Caco-2 (cell line): ENCODE measurements at regions of chr11 and their contacts with region 1.

Region 1: GRCh38 chr11:43311791-43312607 is at the start of gene API5:
- DNase-seq: peak; percentile 95 to 96
- H3K4me3 ChIP-seq: peak within 1 kb of the TSS; percentile 79
- H3K4me3 Mint-ChIP-seq: peak within 1 kb of the TSS; percentile 99
- H3K27ac Mint-ChIP-seq: peak within 1 kb of the TSS; percentile 97
- H3K4me1 ChIP-seq: peaks cover 6% of the 10 kb centered on the region; the same call in 1 of the 2 replicates
- H3K4me1 Mint-ChIP-seq: peaks cover 7% of the 10 kb centered on the region
- H3K27me3 ChIP-seq: no peaks in the 10 kb centered on the region
- H3K27me3 Mint-ChIP-seq: no peaks in the 10 kb centered on the region
- CTCF ChIP-seq: peak; percentile 67 to 95
- total RNA-seq, gene API5: 129 and 140 TPM in 2 replicates

Region 2: DNA sequence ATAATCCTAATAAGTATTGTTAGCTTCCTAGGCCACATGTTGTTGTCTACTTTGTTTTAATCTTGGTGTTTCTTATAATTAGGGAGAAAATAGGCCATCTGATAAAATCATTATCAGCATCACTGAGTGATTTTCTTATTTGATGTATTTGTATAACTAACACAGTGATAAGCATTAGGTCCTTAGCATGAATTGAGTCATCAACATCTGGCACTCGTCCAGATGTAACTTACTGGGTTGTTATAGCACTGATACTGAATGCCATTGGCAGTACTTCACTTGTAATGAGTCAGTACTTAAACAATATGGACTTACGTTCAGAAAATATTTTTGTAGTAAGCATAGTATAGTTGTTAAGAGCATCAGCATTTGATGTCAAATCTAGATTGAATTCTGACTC is 16.0 kb after region 1 on chr11:
- CTCF ChIA-PET with region 1: no interaction called
- POLR2A ChIA-PET with region 1: no interaction called
- intact Hi-C with region 1: no loop called
- DNase-seq: no peak
- H3K4me3 ChIP-seq: no peak overlapping the region
- H3K4me3 Mint-ChIP-seq: no peak overlapping the region
- H3K27ac Mint-ChIP-seq: no peak overlapping the region
- H3K4me1 ChIP-seq: no peaks in the 10 kb centered on the region
- H3K4me1 Mint-ChIP-seq: no peaks in the 10 kb centered on the region
- H3K27me3 ChIP-seq: no peaks in the 10 kb centered on the region
- H3K27me3 Mint-ChIP-seq: no peaks in the 10 kb centered on the region
- CTCF ChIP-seq: no peak

Region 3: DNA sequence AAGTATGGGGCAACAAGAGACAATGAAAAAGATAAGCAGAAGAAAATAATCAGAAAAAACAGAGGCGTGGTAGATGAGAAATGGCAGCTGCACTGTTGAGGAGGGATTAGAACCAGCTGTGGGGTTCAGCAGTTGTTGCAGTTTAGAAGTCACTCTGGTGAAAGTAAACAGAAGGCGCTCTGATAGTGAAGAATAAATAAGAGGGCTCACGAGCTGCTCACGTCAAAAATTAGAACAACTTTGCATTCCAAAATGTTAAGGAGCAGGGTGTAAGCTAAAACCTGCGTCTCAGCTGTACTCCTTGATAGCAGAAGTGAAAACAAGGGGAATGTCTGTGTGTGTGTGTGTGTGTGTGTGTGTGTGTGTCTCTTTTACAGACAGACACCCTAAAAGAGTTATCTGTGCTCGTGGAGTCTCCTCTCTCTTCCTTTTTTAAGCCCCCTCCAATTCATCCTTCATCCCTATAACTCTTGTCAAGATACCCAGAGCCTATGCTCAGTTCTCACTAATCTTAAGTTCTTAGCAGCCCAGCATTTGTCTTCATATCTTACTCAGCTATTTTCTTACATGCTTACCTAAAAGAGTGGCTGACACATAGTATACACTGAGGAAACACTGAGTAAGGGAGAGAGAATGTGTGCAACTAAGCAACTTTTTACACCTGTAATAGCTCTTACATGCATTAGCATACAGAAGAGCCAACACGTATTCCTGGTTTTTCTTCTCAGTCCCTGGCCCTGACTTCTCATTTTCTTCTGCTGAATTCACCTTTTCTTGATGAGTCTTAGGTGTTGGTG is 55.6 kb after region 1 on chr11:
- CTCF ChIA-PET with region 1: interaction called, 10 read pairs
- POLR2A ChIA-PET with region 1: no interaction called
- intact Hi-C with region 1: no loop called
- DNase-seq: no peak
- H3K4me3 ChIP-seq: no peak overlapping the region
- H3K4me3 Mint-ChIP-seq: no peak overlapping the region
- H3K27ac Mint-ChIP-seq: no peak overlapping the region
- H3K4me1 ChIP-seq: peaks cover 16% of the 10 kb centered on the region
- H3K4me1 Mint-ChIP-seq: peaks cover 27% of the 10 kb centered on the region
- H3K27me3 ChIP-seq: no peaks in the 10 kb centered on the region
- H3K27me3 Mint-ChIP-seq: no peaks in the 10 kb centered on the region
- CTCF ChIP-seq: no peak

Region 4: GRCh38 chr11:43410394-43410793 is 98.4 kb after region 1 on chr11:
- CTCF ChIA-PET with region 1: interaction called, 4 read pairs
- POLR2A ChIA-PET with region 1: no interaction called
- intact Hi-C with region 1: loop called (anchors 1 kb)
- DNase-seq: peak; percentile 68 to 72
- H3K4me3 ChIP-seq: no peak overlapping the region
- H3K4me3 Mint-ChIP-seq: peak overlapping the region; percentile 63
- H3K27ac Mint-ChIP-seq: peak overlapping the region; percentile 58
- H3K4me1 ChIP-seq: peaks cover 30% of the 10 kb centered on the region
- H3K4me1 Mint-ChIP-seq: peaks cover 23% of the 10 kb centered on the region
- H3K27me3 ChIP-seq: no peaks in the 10 kb centered on the region
- H3K27me3 Mint-ChIP-seq: no peaks in the 10 kb centered on the region
- CTCF ChIP-seq: no peak

Region 5: GRCh38 chr11:43419460-43419859 is 107.5 kb after region 1 on chr11:
- CTCF ChIA-PET with region 1: interaction called, 24 read pairs
- POLR2A ChIA-PET with region 1: no interaction called
- intact Hi-C with region 1: loop called (anchors 2 kb)
- DNase-seq: peak in 1 of 2 experiments; percentile 55
- H3K4me3 ChIP-seq: no peak overlapping the region
- H3K4me3 Mint-ChIP-seq: no peak overlapping the region
- H3K27ac Mint-ChIP-seq: no peak overlapping the region
- H3K4me1 ChIP-seq: no peaks in the 10 kb centered on the region
- H3K4me1 Mint-ChIP-seq: no peaks in the 10 kb centered on the region
- H3K27me3 ChIP-seq: no peaks in the 10 kb centered on the region
- H3K27me3 Mint-ChIP-seq: no peaks in the 10 kb centered on the region
- CTCF ChIP-seq: peak; percentile 63 to 65